B cell (primary cell): ENCODE measurements at regions of chr1 and their contacts with region 1.

Region 1: GRCh38 chr1:172818841-172819527 is 160.1 kb downstream of the FASLG start:
- DNase-seq: peak; percentile 94
- ATAC-seq: peak; percentile 77
- H3K4me3 ChIP-seq: peak overlapping the region in 4 of 5 experiments; percentile 4 to 37 (median 17)
- H3K4me3 Mint-ChIP-seq: peak overlapping the region; percentile 77
- H3K27ac ChIP-seq: peak overlapping the region; percentile 84 to 93
- H3K27ac Mint-ChIP-seq: peak overlapping the region; percentile 93
- H3K4me1 ChIP-seq: peaks cover 26 to 35% of the 10 kb centered on the region in 2 donors
- H3K4me1 Mint-ChIP-seq: peaks cover 41% of the 10 kb centered on the region
- H3K27me3 ChIP-seq: no peaks in the 10 kb centered on the region
- H3K27me3 Mint-ChIP-seq: no peaks in the 10 kb centered on the region
- CTCF ChIP-seq: no peak

Region 2: GRCh38 chr1:172532700-172533509 is 286.1 kb before region 1 on chr1 and contains the start of gene SUCO:
- CTCF ChIA-PET with region 1: no interaction called
- POLR2A ChIA-PET with region 1: no interaction called
- intact Hi-C with region 1: loop called (anchors 2 kb)
- DNase-seq: peak; percentile 100
- ATAC-seq: peak; percentile 80
- H3K4me3 ChIP-seq: peak within 1 kb of the TSS; percentile 64 to 98 (median 96)
- H3K4me3 Mint-ChIP-seq: peak within 1 kb of the TSS; percentile 100
- H3K27ac ChIP-seq: peak within 1 kb of the TSS; percentile 99
- H3K27ac Mint-ChIP-seq: peak within 1 kb of the TSS; percentile 100
- H3K4me1 ChIP-seq: peaks cover 22 to 37% of the 10 kb centered on the region in 2 donors
- H3K4me1 Mint-ChIP-seq: peaks cover 45% of the 10 kb centered on the region
- H3K27me3 ChIP-seq: no peaks in the 10 kb centered on the region
- H3K27me3 Mint-ChIP-seq: peaks cover 9% of the 10 kb centered on the region
- CTCF ChIP-seq: peak; percentile 13
- total RNA-seq, gene SUCO: 59.7 and 59.9 TPM in 2 replicates

Region 3: GRCh38 chr1:172895050-172895460 is 76.1 kb after region 1 on chr1:
- CTCF ChIA-PET with region 1: interaction called, 9 read pairs
- POLR2A ChIA-PET with region 1: no interaction called
- intact Hi-C with region 1: loop called (anchors 2 kb)
- DNase-seq: peak; percentile 53
- ATAC-seq: peak; percentile 82
- H3K4me3 ChIP-seq: peak overlapping the region in 3 of 5 experiments; percentile 27 to 50 (median 29)
- H3K4me3 Mint-ChIP-seq: peak overlapping the region; percentile 63
- H3K27ac ChIP-seq: peak overlapping the region; percentile 25 to 70
- H3K27ac Mint-ChIP-seq: peak overlapping the region; percentile 76
- H3K4me1 ChIP-seq: peaks cover 20% of the 10 kb centered on the region in 2 donors
- H3K4me1 Mint-ChIP-seq: peaks cover 40% of the 10 kb centered on the region
- H3K27me3 ChIP-seq: no peaks in the 10 kb centered on the region
- H3K27me3 Mint-ChIP-seq: no peaks in the 10 kb centered on the region
- CTCF ChIP-seq: no peak

Region 4: DNA sequence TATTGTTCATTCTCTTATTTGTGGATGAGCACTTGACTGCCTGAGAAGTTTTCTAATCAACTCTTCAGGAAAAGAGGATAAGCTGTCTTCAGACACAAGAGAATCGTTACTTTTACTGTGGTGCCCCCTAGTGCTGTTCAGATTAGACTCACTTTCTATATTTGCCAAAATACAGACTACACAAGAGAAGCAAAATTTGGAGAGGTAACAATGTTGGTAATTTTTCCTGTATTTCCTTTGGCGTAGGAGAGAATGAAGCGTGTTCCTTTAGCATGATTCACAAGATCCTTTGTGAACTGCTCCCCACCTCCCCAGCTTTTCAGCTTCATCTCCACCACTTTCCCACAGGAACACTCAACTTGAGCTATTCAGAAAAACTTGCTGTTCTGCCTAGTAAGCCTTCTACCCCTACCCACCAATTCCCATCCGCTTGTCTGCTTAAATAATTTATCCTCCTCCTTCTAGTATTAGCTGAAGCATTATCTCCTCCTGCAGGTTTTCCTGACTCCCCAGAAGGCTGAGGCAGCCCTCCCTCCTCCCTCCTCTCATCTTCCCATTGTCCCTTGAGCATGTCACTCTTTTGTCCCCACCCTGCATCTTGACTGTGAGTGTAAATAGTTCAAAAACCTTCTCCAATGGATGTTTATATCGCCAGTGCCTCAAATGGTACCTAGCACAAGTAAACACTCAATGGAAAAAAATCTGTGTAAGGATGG is 383.6 kb after region 1 on chr1:
- CTCF ChIA-PET with region 1: interaction called, 266 read pairs
- POLR2A ChIA-PET with region 1: no interaction called
- intact Hi-C with region 1: loop called (anchors 1 kb)
- DNase-seq: peak; percentile 60
- ATAC-seq: no peak
- H3K4me3 ChIP-seq: no peak overlapping the region
- H3K4me3 Mint-ChIP-seq: no peak overlapping the region
- H3K27ac ChIP-seq: no peak overlapping the region
- H3K27ac Mint-ChIP-seq: no peak overlapping the region
- H3K4me1 ChIP-seq: peaks cover 41 to 63% of the 10 kb centered on the region in 2 donors
- H3K4me1 Mint-ChIP-seq: peaks cover 40% of the 10 kb centered on the region
- H3K27me3 ChIP-seq: no peaks in the 10 kb centered on the region
- H3K27me3 Mint-ChIP-seq: no peaks in the 10 kb centered on the region
- CTCF ChIP-seq: peak; percentile 62

Region 5: GRCh38 chr1:173714759-173715537 is 896.0 kb after region 1 on chr1 and contains the start of gene KLHL20:
- CTCF ChIA-PET with region 1: no interaction called
- POLR2A ChIA-PET with region 1: no interaction called
- intact Hi-C with region 1: loop called (anchors 2 kb)
- DNase-seq: peak; percentile 90
- ATAC-seq: peak; percentile 93
- H3K4me3 ChIP-seq: peak within 1 kb of the TSS; percentile 76 to 92 (median 84)
- H3K4me3 Mint-ChIP-seq: peak within 1 kb of the TSS; percentile 98
- H3K27ac ChIP-seq: peak within 1 kb of the TSS; percentile 75 to 84
- H3K27ac Mint-ChIP-seq: peak within 1 kb of the TSS; percentile 96
- H3K4me1 ChIP-seq: peaks cover 10 to 15% of the 10 kb centered on the region in 2 donors
- H3K4me1 Mint-ChIP-seq: peaks cover 23% of the 10 kb centered on the region
- H3K27me3 ChIP-seq: peaks cover 0 to 9% (median 2%) of the 10 kb centered on the region in 4 experiments
- H3K27me3 Mint-ChIP-seq: peaks cover 26% of the 10 kb centered on the region
- CTCF ChIP-seq: no peak
- total RNA-seq, gene KLHL20: 32.2 and 35.4 TPM in 2 replicates

Region 6: GRCh38 chr1:174159252-174160108 is 1340.5 kb after region 1 on chr1 and contains the start of gene RABGAP1L:
- CTCF ChIA-PET with region 1: no interaction called
- POLR2A ChIA-PET with region 1: no interaction called
- intact Hi-C with region 1: loop called (anchors 5 kb)
- DNase-seq: peak; percentile 96
- ATAC-seq: peak; percentile 86
- H3K4me3 ChIP-seq: peak within 1 kb of the TSS; percentile 76 to 98 (median 93)
- H3K4me3 Mint-ChIP-seq: peak within 1 kb of the TSS; percentile 95
- H3K27ac ChIP-seq: peak within 1 kb of the TSS; percentile 85 to 89
- H3K27ac Mint-ChIP-seq: peak within 1 kb of the TSS; percentile 97
- H3K4me1 ChIP-seq: peaks cover 29 to 48% of the 10 kb centered on the region in 2 donors
- H3K4me1 Mint-ChIP-seq: peaks cover 60% of the 10 kb centered on the region
- H3K27me3 ChIP-seq: no peaks in the 10 kb centered on the region
- H3K27me3 Mint-ChIP-seq: no peaks in the 10 kb centered on the region
- CTCF ChIP-seq: no peak
- total RNA-seq, gene RABGAP1L: 159 and 163 TPM in 2 replicates